Left colon (tissue), 2 donors: ENCODE measurements at regions of chr10 and their contacts with region 1.

Region 1: GRCh38 chr10:124741281-124741921 is 2.8 kb downstream of the FAM53B start:
- DNase-seq: peak; percentile 85 to 94
- ATAC-seq: peak; percentile 39

Region 2: GRCh38 chr10:124530215-124530665 is 211.2 kb before region 1 on chr10:
- intact Hi-C with region 1: loop called (anchors 5 kb)
- DNase-seq: peak; percentile 77 to 92
- ATAC-seq: peak; percentile 91

Region 3: GRCh38 chr10:124632064-124632531 is 109.3 kb before region 1 on chr10:
- intact Hi-C with region 1: loop called (anchors 5 to 10 kb)
- DNase-seq: no peak
- ATAC-seq: no peak